ENCODE measurements at regions of chr19 and their contacts with region 1.

Region 1: DNA sequence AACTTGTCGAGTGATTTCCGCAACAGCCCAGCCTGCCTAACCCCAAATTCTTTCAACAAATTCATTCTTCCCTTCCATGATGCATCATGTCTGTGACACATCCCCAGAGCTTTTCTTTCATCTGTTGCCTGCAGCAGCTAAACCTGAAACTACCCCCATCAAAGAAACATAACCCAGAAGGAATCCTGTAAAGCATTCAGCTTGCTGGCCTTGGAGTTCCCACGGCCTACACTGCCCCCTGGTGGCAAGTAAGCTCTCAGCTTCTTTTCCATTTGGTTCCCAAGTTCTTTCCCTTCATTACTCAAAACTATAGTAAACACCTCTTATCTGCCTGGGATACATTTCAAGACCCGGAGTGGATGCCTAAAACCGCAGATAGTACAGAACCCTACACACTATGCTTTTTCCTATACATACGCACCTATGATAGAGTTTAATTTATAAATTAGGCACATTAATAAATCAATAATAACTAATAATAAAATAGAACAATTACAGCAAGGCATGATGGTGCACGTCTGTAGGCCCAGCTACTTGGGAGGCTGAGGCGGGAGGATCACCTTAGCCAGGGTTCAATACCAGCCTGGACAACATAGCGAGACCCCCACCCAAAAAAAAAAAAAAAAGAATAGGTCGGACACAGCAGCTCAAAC is 7.4 kb downstream of the ETHE1 start:
- DNase-seq: peak; percentile 75 to 79 (median 78)
- H3K4me3 ChIP-seq: no peak overlapping the region
- H3K4me3 Mint-ChIP-seq: peak overlapping the region in 3 of 8 donors; percentile 2 to 13 (median 9)
- H3K27ac ChIP-seq: no peak overlapping the region
- H3K27ac Mint-ChIP-seq: peak overlapping the region in 6 of 7 donors; percentile 14 to 82 (median 41)
- H3K4me1 ChIP-seq: peaks cover 11% of the 10 kb centered on the region
- H3K4me1 Mint-ChIP-seq: peaks cover 13 to 14% (median 13%) of the 10 kb centered on the region in 4 donors
- H3K27me3 ChIP-seq: no peaks in the 10 kb centered on the region
- H3K27me3 Mint-ChIP-seq: no peaks in the 10 kb centered on the region

Region 2: DNA sequence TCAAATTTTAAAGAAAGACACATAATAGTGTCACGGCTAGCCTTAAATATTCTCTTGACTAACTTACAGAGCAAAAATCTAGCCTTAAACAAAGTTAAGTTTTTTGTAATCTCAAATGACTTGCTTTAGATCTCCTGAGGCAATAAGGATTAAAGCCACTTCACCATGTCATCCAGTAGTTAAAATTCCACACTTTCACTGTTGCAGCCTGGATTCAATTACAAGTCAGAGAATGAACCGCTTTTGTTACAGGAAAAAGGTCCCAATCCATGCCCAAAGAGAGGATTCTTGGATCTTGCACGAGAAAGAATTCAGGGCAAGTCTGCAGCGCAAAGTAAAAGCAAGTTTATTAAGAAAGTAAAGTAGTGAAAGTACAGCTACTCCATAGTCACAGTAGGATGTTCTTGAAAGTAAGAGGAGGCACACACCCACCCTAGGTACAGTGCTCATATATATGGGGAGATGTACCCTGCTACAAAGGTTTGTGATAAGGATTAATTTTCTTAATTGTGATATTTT is 200.7 kb before region 1 on chr19:
- CTCF ChIA-PET with region 1: no interaction called
- POLR2A ChIA-PET with region 1: no interaction called
- intact Hi-C with region 1: no loop called
- DNase-seq: no peak
- H3K4me3 ChIP-seq: no peak overlapping the region
- H3K4me3 Mint-ChIP-seq: no peak overlapping the region
- H3K27ac ChIP-seq: no peak overlapping the region
- H3K27ac Mint-ChIP-seq: no peak overlapping the region
- H3K4me1 ChIP-seq: no peaks in the 10 kb centered on the region
- H3K4me1 Mint-ChIP-seq: no peaks in the 10 kb centered on the region
- H3K27me3 ChIP-seq: no peaks in the 10 kb centered on the region
- H3K27me3 Mint-ChIP-seq: peaks cover 2 to 3% of the 10 kb centered on the region in 2 donors

Region 3: DNA sequence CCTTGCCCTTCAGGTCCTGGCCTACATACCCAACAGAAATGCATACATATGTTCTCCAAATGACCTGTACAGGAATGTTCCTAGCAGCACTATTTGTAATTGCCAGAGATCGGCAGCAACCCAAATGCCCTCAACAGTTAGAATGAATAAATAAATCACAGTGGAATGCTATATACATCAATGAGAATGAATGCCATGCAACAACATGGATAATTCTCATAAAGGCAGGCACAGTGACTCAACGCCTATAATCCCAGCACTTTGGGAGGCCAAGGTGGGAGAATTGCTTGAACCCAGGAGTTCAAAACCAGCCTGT is 86.2 kb before region 1 on chr19:
- CTCF ChIA-PET with region 1: interaction called, 835 read pairs
- POLR2A ChIA-PET with region 1: interaction called, 29 read pairs
- intact Hi-C with region 1: loop called (anchors 1 kb)
- DNase-seq: no peak
- H3K4me3 ChIP-seq: no peak overlapping the region
- H3K4me3 Mint-ChIP-seq: no peak overlapping the region
- H3K27ac ChIP-seq: no peak overlapping the region
- H3K27ac Mint-ChIP-seq: peak overlapping the region in 5 of 7 donors; percentile 54 to 84 (median 68)
- H3K4me1 ChIP-seq: peaks cover 44% of the 10 kb centered on the region
- H3K4me1 Mint-ChIP-seq: peaks cover 38 to 43% (median 40%) of the 10 kb centered on the region in 4 donors
- H3K27me3 ChIP-seq: no peaks in the 10 kb centered on the region
- H3K27me3 Mint-ChIP-seq: no peaks in the 10 kb centered on the region

Region 4: DNA sequence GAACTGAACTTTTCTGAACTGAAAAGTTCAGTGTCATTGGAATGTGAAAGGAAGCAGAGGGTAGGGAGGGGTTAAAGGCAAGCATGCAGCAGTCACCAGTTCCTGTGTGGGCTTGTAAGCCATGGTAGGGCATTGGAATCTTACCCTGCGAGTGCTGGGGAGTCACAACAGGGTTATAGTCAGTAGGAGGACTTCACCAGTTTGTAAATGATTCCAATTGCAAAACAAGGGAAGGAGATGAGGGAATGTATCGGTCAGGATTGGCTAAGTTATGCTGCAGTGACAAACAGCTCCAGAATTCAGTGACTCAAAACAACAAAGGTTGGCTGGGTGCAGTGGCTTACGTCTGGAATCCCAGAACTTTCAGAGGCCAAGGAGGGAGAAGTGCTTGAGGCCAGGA is 67.0 kb before region 1 on chr19:
- CTCF ChIA-PET with region 1: interaction called, 835 read pairs
- POLR2A ChIA-PET with region 1: interaction called, 69 read pairs
- intact Hi-C with region 1: loop called (anchors 1 kb)
- DNase-seq: no peak
- H3K4me3 ChIP-seq: no peak overlapping the region
- H3K4me3 Mint-ChIP-seq: no peak overlapping the region
- H3K27ac ChIP-seq: no peak overlapping the region
- H3K27ac Mint-ChIP-seq: peak overlapping the region in 4 of 7 donors; percentile 5 to 78 (median 56)
- H3K4me1 ChIP-seq: peaks cover 6% of the 10 kb centered on the region
- H3K4me1 Mint-ChIP-seq: peaks cover 0 to 13% (median 13%) of the 10 kb centered on the region in 4 donors
- H3K27me3 ChIP-seq: no peaks in the 10 kb centered on the region
- H3K27me3 Mint-ChIP-seq: no peaks in the 10 kb centered on the region

Region 5: DNA sequence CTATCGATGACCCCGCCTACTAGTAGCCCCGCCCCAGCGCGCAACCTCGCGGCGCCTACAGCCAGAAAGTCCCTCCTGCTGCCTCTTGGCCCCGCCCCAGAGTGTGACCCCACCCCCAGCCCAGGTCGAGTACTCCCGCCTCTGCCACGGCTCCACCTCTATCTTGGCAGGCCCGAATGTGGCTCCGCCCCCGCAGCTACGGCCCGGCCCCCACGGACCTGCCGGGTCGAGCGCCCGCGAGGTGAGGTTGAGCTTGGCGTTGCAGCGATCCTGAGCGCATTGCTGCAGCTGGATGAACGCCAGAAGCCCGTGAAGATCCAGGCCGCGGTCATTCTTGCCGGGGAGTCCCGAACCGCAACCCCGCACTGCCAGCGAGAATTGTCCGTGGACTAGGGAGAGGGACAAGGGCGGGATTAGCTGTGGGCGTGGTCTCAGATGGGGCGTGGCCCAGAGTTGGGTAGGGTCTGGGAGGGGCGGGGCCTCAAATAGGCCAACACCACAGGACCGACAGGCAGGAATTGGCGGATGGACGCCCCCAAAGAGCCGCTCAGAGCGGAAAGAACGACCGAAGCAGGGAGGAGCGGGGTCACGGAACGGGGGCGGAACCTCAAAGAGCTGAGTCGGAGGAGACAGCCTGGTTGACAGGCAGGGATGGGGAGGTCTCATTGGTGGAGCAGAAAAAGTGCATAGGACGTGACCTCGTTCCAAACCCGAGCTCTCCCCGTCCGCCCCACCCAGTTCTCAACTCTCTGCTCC is 56.0 kb before region 1 on chr19:
- CTCF ChIA-PET with region 1: interaction called, 21 read pairs
- POLR2A ChIA-PET with region 1: interaction called, 33 read pairs
- intact Hi-C with region 1: no loop called
- DNase-seq: peak; percentile 98 to 100 (median 98)
- H3K4me3 ChIP-seq: peak overlapping the region; percentile 79 to 98
- H3K4me3 Mint-ChIP-seq: peak overlapping the region; percentile 90 to 98 (median 94)
- H3K27ac ChIP-seq: peak overlapping the region; percentile 80
- H3K27ac Mint-ChIP-seq: peak overlapping the region; percentile 95 to 100 (median 99)
- H3K4me1 ChIP-seq: peaks cover 34% of the 10 kb centered on the region
- H3K4me1 Mint-ChIP-seq: peaks cover 25 to 64% (median 43%) of the 10 kb centered on the region in 4 donors
- H3K27me3 ChIP-seq: no peaks in the 10 kb centered on the region
- H3K27me3 Mint-ChIP-seq: no peaks in the 10 kb centered on the region

Region 6: GRCh38 chr19:43503501-43504425 is 15.8 kb before region 1 on chr19:
- CTCF ChIA-PET with region 1: interaction called, 25 read pairs
- POLR2A ChIA-PET with region 1: interaction called, 13 read pairs
- intact Hi-C with region 1: loop called (anchors 2 kb)
- DNase-seq: peak; percentile 96 to 99 (median 97)
- H3K4me3 ChIP-seq: peak overlapping the region; percentile 73 to 74
- H3K4me3 Mint-ChIP-seq: peak overlapping the region; percentile 91 to 98 (median 94)
- H3K27ac ChIP-seq: peak overlapping the region; percentile 89
- H3K27ac Mint-ChIP-seq: peak overlapping the region; percentile 95 to 100 (median 98)
- H3K4me1 ChIP-seq: peaks cover 22% of the 10 kb centered on the region
- H3K4me1 Mint-ChIP-seq: peaks cover 16 to 51% (median 34%) of the 10 kb centered on the region in 4 donors
- H3K27me3 ChIP-seq: no peaks in the 10 kb centered on the region
- H3K27me3 Mint-ChIP-seq: no peaks in the 10 kb centered on the region

Region 7: DNA sequence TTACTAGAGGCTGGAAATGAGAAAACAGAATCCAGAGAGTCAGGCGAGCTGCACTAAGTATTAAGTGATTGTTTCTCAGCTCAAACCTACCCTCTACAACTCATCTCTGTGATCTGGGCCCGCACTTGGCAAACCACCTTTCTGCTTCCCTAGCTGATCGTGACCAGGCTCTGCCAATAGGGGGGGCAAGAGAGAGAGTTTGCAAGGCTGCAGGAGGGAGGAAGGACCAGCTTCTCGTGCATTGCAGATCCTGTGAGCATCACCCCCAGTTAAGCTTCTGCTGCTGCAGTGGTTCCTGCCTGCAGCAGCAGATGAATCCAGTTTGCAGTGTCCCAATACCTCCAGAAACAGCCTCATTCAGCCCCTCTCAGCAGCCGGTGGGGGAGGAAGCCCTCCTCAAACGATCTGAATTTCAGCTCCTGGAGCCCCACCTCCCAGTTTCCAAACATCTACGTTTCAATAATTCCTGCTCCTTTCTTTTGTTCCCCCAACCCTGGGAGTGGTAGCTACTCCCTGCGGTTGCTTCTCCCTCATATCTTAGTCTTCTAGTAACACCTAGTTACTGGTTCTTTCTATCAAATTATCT is 35.7 kb after region 1 on chr19:
- CTCF ChIA-PET with region 1: interaction called, 17 read pairs
- POLR2A ChIA-PET with region 1: no interaction called
- intact Hi-C with region 1: no loop called
- DNase-seq: peak; percentile 81 to 85 (median 82)
- H3K4me3 ChIP-seq: no peak overlapping the region
- H3K4me3 Mint-ChIP-seq: peak overlapping the region in 2 of 8 donors; percentile 31 to 52
- H3K27ac ChIP-seq: no peak overlapping the region
- H3K27ac Mint-ChIP-seq: peak overlapping the region; percentile 6 to 85 (median 77)
- H3K4me1 ChIP-seq: peaks cover 7% of the 10 kb centered on the region
- H3K4me1 Mint-ChIP-seq: peaks cover 10 to 19% (median 12%) of the 10 kb centered on the region in 4 donors
- H3K27me3 ChIP-seq: no peaks in the 10 kb centered on the region
- H3K27me3 Mint-ChIP-seq: no peaks in the 10 kb centered on the region

Region 8: GRCh38 chr19:43743022-43743421 is 223.5 kb after region 1 on chr19:
- CTCF ChIA-PET with region 1: no interaction called
- POLR2A ChIA-PET with region 1: no interaction called
- intact Hi-C with region 1: no loop called
- DNase-seq: no peak
- H3K4me3 ChIP-seq: no peak overlapping the region
- H3K4me3 Mint-ChIP-seq: no peak overlapping the region
- H3K27ac ChIP-seq: no peak overlapping the region
- H3K27ac Mint-ChIP-seq: peak overlapping the region in 2 of 7 donors; percentile 16 to 23
- H3K4me1 ChIP-seq: peaks cover 6% of the 10 kb centered on the region
- H3K4me1 Mint-ChIP-seq: peaks cover 11 to 21% (median 14%) of the 10 kb centered on the region in 4 donors
- H3K27me3 ChIP-seq: no peaks in the 10 kb centered on the region
- H3K27me3 Mint-ChIP-seq: no peaks in the 10 kb centered on the region